ENCODE measurements at regions of chr1 and their contacts with region 1.

Region 1: GRCh38 chr1:232486454-232487207 is 143.3 kb downstream of the SIPA1L2 start:
- DNase-seq: no peak
- ATAC-seq: peak; percentile 52 to 77 (median 68)
- H3K4me3 ChIP-seq: no peak overlapping the region
- H3K27ac ChIP-seq: peak overlapping the region; percentile 68
- H3K4me1 ChIP-seq: peaks cover 24% of the 10 kb centered on the region
- H3K27me3 ChIP-seq: no peaks in the 10 kb centered on the region
- CTCF ChIP-seq: no peak

Region 2: GRCh38 chr1:232174306-232174705 is 312.3 kb before region 1 on chr1:
- intact Hi-C with region 1: no loop called
- DNase-seq: no peak
- ATAC-seq: no peak
- H3K4me3 ChIP-seq: no peak overlapping the region
- H3K27ac ChIP-seq: no peak overlapping the region
- H3K4me1 ChIP-seq: no peaks in the 10 kb centered on the region
- H3K27me3 ChIP-seq: peaks cover 0 to 2% (median 0%) of the 10 kb centered on the region in 3 donors
- CTCF ChIP-seq: no peak

Region 3: GRCh38 chr1:232542638-232543593 is 56.3 kb after region 1 on chr1:
- intact Hi-C with region 1: loop called in 1 of 2 experiments (anchors 10 kb)
- DNase-seq: no peak
- ATAC-seq: no peak
- H3K4me3 ChIP-seq: no peak overlapping the region
- H3K27ac ChIP-seq: no peak overlapping the region
- H3K4me1 ChIP-seq: peaks cover 13% of the 10 kb centered on the region
- H3K27me3 ChIP-seq: no peaks in the 10 kb centered on the region
- CTCF ChIP-seq: no peak